CD14-positive monocyte (primary cell): ENCODE measurements at regions of chr6 and their contacts with region 1.

Region 1: GRCh38 chr6:154675602-154676088 is 57.6 kb upstream of the SCAF8 start:
- DNase-seq: peak; percentile 91 to 97 (median 92)
- H3K4me3 ChIP-seq: no peak overlapping the region
- H3K4me3 Mint-ChIP-seq: no peak overlapping the region
- H3K27ac ChIP-seq: no peak overlapping the region
- H3K27ac Mint-ChIP-seq: no peak overlapping the region
- H3K4me1 ChIP-seq: no peaks in the 10 kb centered on the region
- H3K4me1 Mint-ChIP-seq: no peaks in the 10 kb centered on the region
- H3K27me3 ChIP-seq: no peaks in the 10 kb centered on the region
- H3K27me3 Mint-ChIP-seq: no peaks in the 10 kb centered on the region
- CTCF ChIP-seq: peak; percentile 99

Region 2: DNA sequence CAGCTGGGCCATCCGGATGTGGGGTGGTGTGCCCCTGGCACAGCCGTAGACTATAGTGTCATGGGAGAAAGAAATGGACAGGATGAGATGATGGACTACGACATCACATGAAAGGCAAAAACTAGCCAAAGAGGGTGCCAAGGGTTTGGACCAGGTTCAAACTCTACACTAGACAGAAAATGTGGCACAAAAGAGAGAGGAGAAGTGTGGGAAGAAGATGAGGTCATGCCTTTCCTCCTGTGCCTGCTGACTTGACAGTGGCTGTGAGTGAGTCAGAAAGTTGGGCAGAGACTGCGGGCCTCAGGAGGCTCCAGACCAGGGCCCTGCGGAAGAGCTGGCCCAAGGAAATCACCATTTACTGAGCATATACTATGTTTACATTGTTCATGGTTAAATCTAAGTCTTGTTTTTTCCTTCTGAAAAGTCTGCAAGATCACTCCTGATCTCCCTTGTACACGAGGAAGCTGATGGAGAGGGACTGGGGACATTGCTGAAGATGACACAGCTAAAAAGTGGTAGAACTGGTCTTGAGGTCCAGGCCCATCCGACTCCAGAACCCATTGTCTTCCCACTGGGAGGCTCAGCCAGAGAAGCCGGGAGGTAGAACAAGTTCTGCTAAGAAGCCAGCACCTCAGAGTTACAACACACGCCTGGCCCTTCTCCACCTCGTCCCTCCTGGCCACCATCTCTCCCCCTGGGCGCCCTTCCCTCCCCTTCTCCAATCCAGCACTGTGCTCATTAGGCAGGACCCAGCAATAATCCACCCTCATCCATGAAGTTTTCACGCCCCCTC is 200.8 kb before region 1 on chr6:
- intact Hi-C with region 1: no loop called
- DNase-seq: no peak
- H3K4me3 ChIP-seq: no peak overlapping the region
- H3K4me3 Mint-ChIP-seq: no peak overlapping the region
- H3K27ac ChIP-seq: no peak overlapping the region
- H3K27ac Mint-ChIP-seq: peak overlapping the region in 2 of 7 donors; percentile 12 to 13
- H3K4me1 ChIP-seq: no peaks in the 10 kb centered on the region
- H3K4me1 Mint-ChIP-seq: peaks cover 9% of the 10 kb centered on the region
- H3K27me3 ChIP-seq: no peaks in the 10 kb centered on the region
- H3K27me3 Mint-ChIP-seq: no peaks in the 10 kb centered on the region
- CTCF ChIP-seq: no peak

Region 3: DNA sequence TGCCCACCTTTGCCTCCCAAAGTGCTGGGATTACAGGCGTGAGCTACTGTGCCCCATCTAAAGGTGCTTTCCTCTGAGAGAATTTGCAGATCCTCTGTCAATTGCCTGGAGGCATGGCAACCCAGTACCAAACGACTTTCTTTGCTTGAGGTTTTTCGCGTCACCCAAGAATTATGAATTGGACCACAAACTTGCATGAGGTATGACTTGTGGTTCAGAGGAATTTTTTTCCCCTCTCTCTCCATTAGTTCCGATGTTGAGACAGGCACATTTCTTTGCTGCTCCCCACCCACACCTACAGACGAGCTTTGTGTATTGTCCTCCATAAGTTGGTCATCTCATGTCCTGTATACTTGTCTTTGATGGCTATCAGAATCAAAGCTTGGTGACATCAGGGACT is 45.8 kb after region 1 on chr6:
- intact Hi-C with region 1: no loop called
- DNase-seq: no peak
- H3K4me3 ChIP-seq: no peak overlapping the region
- H3K4me3 Mint-ChIP-seq: no peak overlapping the region
- H3K27ac ChIP-seq: no peak overlapping the region
- H3K27ac Mint-ChIP-seq: no peak overlapping the region
- H3K4me1 ChIP-seq: peaks cover under 1 to 1% of the 10 kb centered on the region in 2 donors
- H3K4me1 Mint-ChIP-seq: no peaks in the 10 kb centered on the region
- H3K27me3 ChIP-seq: no peaks in the 10 kb centered on the region
- H3K27me3 Mint-ChIP-seq: peaks cover 4 to 12% (median 6%) of the 10 kb centered on the region in 3 donors
- CTCF ChIP-seq: no peak

Region 4: GRCh38 chr6:154773610-154774089 is 98.0 kb after region 1 on chr6:
- intact Hi-C with region 1: no loop called
- DNase-seq: no peak
- H3K4me3 ChIP-seq: no peak overlapping the region
- H3K4me3 Mint-ChIP-seq: no peak overlapping the region
- H3K27ac ChIP-seq: no peak overlapping the region
- H3K27ac Mint-ChIP-seq: peak overlapping the region in 1 of 7 donors; percentile 37
- H3K4me1 ChIP-seq: no peaks in the 10 kb centered on the region
- H3K4me1 Mint-ChIP-seq: peaks cover 2% of the 10 kb centered on the region
- H3K27me3 ChIP-seq: no peaks in the 10 kb centered on the region
- H3K27me3 Mint-ChIP-seq: peaks cover 0 to 2% (median 0%) of the 10 kb centered on the region in 3 donors
- CTCF ChIP-seq: no peak

Region 5: DNA sequence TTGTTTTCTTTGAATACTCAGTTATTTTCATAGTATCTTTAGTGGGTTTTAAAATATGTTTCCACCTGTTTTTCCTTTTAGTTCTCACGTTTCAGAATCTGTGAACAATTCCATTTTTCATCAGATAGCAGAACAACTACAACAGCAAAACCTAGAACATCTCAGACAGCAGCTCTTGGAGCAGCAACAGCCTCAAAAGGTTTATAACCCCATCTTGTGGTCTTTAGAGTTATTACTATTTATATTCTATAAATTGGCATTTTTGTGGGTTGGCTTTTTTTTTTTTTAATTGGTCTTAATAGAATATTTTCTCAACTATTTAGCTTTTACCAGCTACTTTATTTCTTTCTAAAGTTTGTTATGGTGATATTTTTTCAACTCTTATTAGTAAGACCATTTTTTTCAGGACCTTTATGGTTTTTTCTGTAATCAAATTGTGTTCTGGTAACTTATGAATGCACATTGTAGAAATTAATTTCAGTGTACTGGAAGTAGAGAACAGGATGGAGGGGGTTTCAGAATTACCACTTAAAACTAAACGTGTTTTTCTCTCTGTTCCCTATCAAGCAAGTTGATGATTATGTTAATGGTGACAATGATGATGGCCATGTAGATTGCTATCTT is 129.8 kb after region 1 on chr6:
- intact Hi-C with region 1: loop called (anchors 2 kb)
- DNase-seq: peak; percentile 5 to 45 (median 33)
- H3K4me3 ChIP-seq: no peak overlapping the region
- H3K4me3 Mint-ChIP-seq: no peak overlapping the region
- H3K27ac ChIP-seq: no peak overlapping the region
- H3K27ac Mint-ChIP-seq: no peak overlapping the region
- H3K4me1 ChIP-seq: no peaks in the 10 kb centered on the region
- H3K4me1 Mint-ChIP-seq: no peaks in the 10 kb centered on the region
- H3K27me3 ChIP-seq: no peaks in the 10 kb centered on the region
- H3K27me3 Mint-ChIP-seq: no peaks in the 10 kb centered on the region
- CTCF ChIP-seq: peak; percentile 71